Activated CD4-positive, alpha-beta memory T cell treated with anti-CD3 and anti-CD28 coated beads for 36 hours (primary cell): ENCODE measurements at regions of chr17 and their contacts with region 1.

Region 1: DNA sequence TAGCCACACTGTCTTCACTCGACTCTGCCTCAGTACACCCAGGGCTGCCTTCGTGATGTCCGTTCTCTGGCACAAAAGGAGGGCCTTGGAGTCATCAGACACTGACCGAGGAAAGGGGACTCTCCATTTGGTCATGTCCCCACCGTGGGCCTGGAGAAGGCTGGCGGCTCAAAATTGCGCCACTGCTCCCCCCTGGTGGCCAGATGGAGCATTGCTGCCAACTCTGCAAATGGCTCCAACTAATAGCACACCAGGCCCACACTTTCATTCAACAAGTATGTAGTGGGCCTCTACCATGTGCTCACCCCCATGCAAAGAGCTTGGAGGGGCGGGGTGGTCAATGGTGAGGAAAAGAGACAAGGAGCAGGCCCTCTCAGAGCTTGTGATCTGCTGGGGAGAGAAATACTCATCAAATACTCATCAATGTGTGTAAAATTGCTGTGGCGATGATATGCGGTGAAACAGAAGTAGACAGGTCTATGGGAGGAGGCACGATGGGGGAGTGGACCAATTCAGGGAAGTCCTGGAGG is 5.2 kb upstream of the GRIN2C start:
- DNase-seq: peak; percentile 81
- H3K4me3 Mint-ChIP-seq: no peak overlapping the region
- H3K27ac Mint-ChIP-seq: no peak overlapping the region
- H3K4me1 Mint-ChIP-seq: peaks cover 12% of the 10 kb centered on the region
- H3K27me3 Mint-ChIP-seq: peaks cover 16% of the 10 kb centered on the region

Region 2: GRCh38 chr17:74742153-74742515 is 122.8 kb before region 1 on chr17:
- CTCF ChIA-PET with region 1: interaction called, 123 read pairs
- POLR2A ChIA-PET with region 1: interaction called, 4 read pairs
- intact Hi-C with region 1: loop called (anchors 5 kb)
- DNase-seq: peak; percentile 79
- H3K4me3 Mint-ChIP-seq: peak overlapping the region; percentile 38
- H3K27ac Mint-ChIP-seq: peak overlapping the region; percentile 88
- H3K4me1 Mint-ChIP-seq: peaks cover 79% of the 10 kb centered on the region
- H3K27me3 Mint-ChIP-seq: no peaks in the 10 kb centered on the region

Region 3: GRCh38 chr17:74795327-74796020 is 69.5 kb before region 1 on chr17:
- CTCF ChIA-PET with region 1: interaction called, 52 read pairs
- POLR2A ChIA-PET with region 1: no interaction called
- intact Hi-C with region 1: loop called (anchors 1 kb)
- DNase-seq: no peak
- H3K4me3 Mint-ChIP-seq: no peak overlapping the region
- H3K27ac Mint-ChIP-seq: no peak overlapping the region
- H3K4me1 Mint-ChIP-seq: peaks cover 12% of the 10 kb centered on the region
- H3K27me3 Mint-ChIP-seq: no peaks in the 10 kb centered on the region

Region 4: DNA sequence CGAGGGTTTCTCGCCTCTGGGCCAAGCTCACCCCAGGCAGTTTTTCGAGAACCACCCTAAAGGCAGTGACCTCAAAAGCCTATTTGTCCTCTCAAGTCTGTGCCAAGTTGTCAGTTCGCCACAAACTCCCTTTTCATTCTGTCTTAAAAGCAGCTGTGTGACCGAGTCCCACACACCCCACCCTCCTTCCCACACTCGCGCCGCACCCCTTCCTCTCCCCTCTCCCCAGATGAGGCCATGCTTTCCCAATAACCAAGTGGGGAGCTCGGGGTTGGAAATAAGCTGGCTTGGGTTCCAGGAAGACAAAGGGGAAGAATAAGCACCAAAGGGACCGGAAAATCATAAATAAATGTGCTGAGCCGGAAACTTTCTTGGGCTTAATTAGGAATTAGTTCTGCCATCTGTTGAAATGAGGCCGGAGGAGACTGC is 42.0 kb before region 1 on chr17:
- CTCF ChIA-PET with region 1: no interaction called
- POLR2A ChIA-PET with region 1: no interaction called
- intact Hi-C with region 1: no loop called
- DNase-seq: no peak
- H3K4me3 Mint-ChIP-seq: no peak overlapping the region
- H3K27ac Mint-ChIP-seq: no peak overlapping the region
- H3K4me1 Mint-ChIP-seq: no peaks in the 10 kb centered on the region
- H3K27me3 Mint-ChIP-seq: no peaks in the 10 kb centered on the region

Region 5: DNA sequence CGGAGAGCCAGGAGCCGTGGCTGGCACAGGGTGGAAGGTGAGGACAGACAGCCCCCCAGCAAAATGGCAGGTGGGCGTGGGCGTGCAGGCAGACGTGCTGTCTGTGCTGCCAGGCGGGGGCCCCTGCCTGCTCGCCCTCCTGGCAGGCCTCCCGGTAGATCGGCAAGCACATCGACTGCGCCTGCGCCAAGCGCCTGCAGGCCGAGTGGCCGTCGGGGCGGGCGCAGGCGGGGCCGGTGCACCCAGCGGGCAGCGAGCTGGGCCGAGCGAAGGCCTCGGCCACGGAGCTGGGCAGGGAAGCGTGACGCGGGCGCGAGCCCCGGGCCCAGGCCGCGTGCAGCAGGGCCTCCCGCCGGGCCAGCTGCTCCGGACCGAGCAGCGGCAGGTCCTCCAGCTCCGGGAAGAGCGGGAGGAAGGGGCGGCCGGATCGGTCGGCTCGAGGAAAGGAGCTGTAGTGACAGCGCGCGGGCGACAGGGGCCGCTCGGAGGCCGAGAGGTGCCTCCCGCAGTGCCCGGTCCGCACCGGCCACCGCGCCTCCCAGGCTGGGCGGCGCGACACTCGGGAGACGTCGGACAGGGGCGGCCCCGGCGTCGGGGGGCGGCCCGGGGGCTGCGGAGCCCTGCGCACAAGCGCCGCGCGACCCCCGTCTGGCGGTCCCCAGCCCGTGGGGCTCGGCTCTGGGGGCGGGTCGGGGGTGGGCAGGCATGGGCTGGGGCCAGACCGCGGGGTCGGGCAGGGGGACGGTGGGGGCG is 22.2 kb before region 1 on chr17:
- CTCF ChIA-PET with region 1: interaction called, 31 read pairs
- POLR2A ChIA-PET with region 1: no interaction called
- intact Hi-C with region 1: no loop called
- DNase-seq: peak; percentile 32
- H3K4me3 Mint-ChIP-seq: no peak overlapping the region
- H3K27ac Mint-ChIP-seq: no peak overlapping the region
- H3K4me1 Mint-ChIP-seq: peaks cover 12% of the 10 kb centered on the region
- H3K27me3 Mint-ChIP-seq: peaks cover 6% of the 10 kb centered on the region

Region 6: DNA sequence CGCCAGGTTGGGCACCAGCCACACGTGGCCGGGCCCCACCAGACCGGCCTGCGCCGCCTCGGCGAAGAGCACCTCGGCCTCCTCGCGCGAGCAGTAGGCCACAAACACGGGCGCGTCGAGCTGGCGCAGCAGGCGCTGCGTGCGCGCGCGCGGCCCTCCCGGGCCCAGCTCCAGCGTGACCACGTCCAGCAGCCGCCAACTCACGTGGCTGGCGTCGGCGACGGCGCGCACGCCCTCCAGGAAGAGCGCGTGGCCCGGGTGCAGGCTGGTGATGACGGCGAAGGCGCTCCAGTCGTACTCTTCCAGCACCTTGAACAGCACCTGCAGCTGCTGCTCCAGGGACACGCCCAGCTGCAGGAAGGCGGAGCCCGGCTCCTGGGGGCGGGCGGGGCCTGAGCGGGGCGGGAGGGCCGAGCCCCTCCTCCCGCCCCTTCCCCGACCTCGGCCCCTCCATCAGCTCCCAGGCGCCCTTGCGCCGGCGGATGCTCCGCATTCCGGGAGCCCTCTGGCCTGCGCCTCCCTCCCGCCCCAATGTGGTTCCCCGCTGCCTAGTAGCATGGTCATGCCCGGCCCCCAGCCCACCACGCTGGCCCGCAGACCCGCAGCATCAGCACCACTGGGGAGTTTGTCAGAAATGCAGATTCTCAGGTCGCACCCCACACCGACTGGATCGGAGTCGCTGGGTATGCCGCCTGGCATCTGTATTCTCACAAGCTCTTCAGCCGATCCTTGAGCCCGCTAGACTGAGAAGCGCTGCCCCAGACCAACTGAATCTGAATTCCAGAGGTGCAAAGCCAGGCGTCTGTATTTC is 12.5 kb before region 1 on chr17:
- CTCF ChIA-PET with region 1: interaction called, 48 read pairs
- POLR2A ChIA-PET with region 1: interaction called, 3 read pairs
- intact Hi-C with region 1: no loop called
- DNase-seq: peak; percentile 71
- H3K4me3 Mint-ChIP-seq: peak overlapping the region; percentile 67
- H3K27ac Mint-ChIP-seq: no peak overlapping the region
- H3K4me1 Mint-ChIP-seq: peaks cover 8% of the 10 kb centered on the region
- H3K27me3 Mint-ChIP-seq: peaks cover 40% of the 10 kb centered on the region